ENCODE measurements at regions of chr3 and their contacts with region 1.

Region 1: DNA sequence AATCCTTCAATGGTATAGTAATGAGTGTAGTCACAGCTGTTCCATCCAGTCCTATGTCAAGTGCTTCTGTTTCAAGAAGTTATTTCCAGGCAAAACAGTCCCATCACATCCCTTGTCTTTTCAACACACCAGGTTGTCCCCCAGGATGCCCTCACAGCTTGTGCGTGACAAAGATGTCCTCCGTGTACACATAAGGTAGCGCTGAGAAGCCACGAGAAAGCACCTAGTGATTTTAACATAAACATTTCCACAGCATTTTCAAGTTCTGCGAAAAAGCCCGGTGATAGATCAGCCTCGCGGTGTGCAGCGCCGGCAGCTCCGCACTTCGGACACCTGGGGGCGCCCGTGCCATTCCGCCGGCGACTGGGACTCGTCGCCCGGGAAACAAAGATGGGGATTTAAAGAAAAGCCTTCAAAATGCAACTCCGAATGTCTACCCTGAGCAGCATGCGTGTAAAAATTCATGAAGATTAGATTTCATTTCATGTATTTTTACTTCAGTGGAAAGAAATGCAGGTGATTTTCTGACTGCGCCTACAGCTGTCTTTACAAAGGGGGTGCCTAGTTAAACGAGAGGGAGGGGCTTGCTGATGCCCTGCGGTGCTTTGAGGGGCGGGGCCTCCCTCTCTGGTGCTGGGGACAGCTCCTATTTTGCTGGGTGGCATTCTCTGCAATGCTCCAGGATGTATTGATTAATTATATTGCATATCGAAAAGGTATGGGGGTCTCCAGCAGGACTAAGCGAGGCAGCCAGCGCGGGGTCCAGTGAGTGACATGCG is 49.9 kb downstream of the KY start:
- DNase-seq: peak; percentile 83
- ATAC-seq: peak; percentile 90
- H3K4me3 Mint-ChIP-seq: no peak overlapping the region
- H3K27ac Mint-ChIP-seq: no peak overlapping the region
- H3K4me1 Mint-ChIP-seq: peaks cover 5% of the 10 kb centered on the region
- H3K27me3 Mint-ChIP-seq: peaks cover 5% of the 10 kb centered on the region

Region 2: DNA sequence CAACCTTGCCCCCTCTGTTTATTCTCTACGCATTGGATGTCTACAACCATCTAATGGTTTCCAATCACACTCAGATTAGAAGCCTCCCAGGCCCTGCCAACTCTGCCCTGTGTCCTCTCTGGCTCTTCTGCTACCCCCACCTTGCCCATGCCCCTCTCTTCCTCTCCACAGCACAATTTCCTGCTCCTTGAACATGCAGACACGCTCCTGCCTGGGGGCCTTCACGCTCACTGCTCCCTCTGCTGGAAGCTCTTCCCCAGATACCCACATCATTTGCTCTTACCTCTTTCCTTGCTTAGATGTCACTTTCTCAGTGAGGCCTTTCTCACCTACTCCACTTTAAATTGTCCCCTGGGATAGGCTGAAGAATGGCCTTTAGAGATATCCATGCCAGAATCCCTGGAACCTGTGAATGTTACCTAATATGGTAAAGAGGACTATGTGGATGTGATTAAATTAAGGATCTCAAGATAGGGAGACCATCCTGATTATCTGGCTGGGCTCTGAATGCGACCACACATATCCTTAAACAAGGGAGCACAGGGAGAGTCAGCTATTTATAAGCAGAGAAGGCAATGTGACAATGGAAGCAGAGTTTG is 40.1 kb after region 1 on chr3:
- CTCF ChIA-PET with region 1: interaction called, 3 read pairs
- POLR2A ChIA-PET with region 1: no interaction called
- intact Hi-C with region 1: loop called (anchors 1 to 2 kb)
- DNase-seq: peak; percentile 42
- ATAC-seq: no peak
- H3K4me3 Mint-ChIP-seq: no peak overlapping the region
- H3K27ac Mint-ChIP-seq: no peak overlapping the region
- H3K4me1 Mint-ChIP-seq: no peaks in the 10 kb centered on the region
- H3K27me3 Mint-ChIP-seq: no peaks in the 10 kb centered on the region

Region 3: DNA sequence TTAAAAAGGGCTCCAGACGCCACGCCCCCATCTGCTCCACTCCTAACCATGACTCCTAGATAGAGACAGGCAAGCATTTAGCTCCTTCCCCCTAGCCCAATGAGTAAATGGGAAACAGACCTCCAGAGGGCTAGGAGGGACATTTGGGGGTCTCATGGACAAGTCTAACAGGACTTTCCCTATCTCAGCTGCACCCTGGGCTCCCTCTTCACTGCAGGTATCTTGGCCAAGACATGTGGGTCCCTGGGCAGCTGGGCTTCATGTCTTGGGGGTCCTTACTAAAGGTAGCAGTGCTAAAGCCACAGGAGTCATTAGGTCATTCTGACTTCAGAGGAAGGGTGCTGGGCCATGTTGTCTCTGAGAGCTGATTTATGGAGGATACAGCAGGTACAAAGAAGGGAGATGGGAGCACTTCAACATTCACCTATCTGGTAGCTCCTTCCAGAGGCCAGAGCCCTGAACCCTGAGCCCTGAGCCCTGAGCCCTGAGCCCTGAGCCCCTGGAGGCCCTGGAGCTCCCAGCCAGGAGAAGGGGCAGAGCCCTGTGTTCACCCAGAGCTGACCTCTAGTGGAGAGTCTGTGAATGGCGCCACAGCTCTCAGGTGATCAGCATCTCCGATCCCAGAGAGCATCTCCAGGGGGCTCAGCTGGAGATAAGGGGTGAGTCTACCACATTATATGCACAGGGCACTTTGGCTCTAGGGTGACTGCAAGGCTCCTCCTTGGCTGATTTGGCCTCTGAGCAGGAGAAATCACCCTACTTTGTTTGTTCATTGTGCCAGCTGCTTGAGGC is 154.1 kb after region 1 on chr3:
- CTCF ChIA-PET with region 1: interaction called, 13 read pairs
- POLR2A ChIA-PET with region 1: no interaction called
- intact Hi-C with region 1: loop called (anchors 1 to 10 kb)
- DNase-seq: peak; percentile 65
- ATAC-seq: no peak
- H3K4me3 Mint-ChIP-seq: no peak overlapping the region
- H3K27ac Mint-ChIP-seq: no peak overlapping the region
- H3K4me1 Mint-ChIP-seq: no peaks in the 10 kb centered on the region
- H3K27me3 Mint-ChIP-seq: peaks cover 13% of the 10 kb centered on the region

Region 4: DNA sequence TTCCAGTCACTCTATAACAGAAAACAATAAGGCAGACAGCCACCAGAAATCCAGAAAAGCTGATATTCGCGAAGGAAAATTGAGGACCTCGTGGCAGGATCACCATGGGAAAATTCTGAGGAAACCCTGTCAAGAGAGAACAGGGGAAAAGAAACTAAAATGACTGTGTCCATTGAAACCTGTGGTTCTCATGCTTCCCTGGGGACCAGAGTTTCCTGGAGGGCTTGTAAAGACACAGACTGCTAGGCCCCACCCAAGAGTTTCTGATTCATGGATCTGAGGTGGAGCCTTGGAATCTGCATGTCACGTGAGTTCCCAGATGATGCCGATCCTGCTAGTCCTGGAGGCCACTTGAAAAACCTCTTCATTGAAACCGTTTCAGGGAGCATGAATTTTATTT is 614.6 kb after region 1 on chr3:
- CTCF ChIA-PET with region 1: no interaction called
- POLR2A ChIA-PET with region 1: no interaction called
- intact Hi-C with region 1: no loop called
- DNase-seq: no peak
- ATAC-seq: no peak
- H3K4me3 Mint-ChIP-seq: no peak overlapping the region
- H3K27ac Mint-ChIP-seq: no peak overlapping the region
- H3K4me1 Mint-ChIP-seq: no peaks in the 10 kb centered on the region
- H3K27me3 Mint-ChIP-seq: no peaks in the 10 kb centered on the region

Region 5: DNA sequence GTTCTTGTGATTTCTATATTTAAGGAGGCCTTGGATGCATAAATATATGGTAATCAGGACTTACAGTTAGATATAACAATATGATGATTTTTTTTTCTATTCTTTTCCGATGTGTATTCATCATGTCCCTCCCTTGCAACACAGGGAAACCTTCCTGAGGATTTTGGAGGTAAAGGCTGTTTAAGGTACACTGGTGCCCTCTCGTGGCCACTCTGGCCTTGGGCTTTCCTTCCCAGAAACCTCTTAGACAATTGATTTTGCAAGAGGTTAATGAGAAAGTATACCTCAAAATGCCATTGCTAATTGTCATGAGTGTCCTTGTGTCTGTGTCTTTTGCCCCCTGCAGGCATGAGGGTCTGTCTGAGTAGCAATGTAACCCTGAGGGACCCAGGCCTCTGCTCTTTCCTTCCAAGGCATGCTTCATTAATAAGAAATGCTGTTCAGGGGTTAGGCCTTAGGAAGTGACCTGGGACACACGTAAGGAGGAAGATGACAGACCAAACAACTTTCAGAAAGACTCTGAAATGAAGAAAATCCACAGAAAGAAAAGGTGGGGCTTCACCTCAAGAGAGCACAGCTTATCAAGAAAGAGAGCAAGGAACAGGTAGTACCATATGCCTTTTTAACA is 1294.3 kb after region 1 on chr3:
- CTCF ChIA-PET with region 1: interaction called, 4 read pairs
- POLR2A ChIA-PET with region 1: no interaction called
- intact Hi-C with region 1: loop called (anchors 1 to 2 kb)
- DNase-seq: peak; percentile 73
- ATAC-seq: no peak
- H3K4me3 Mint-ChIP-seq: no peak overlapping the region
- H3K27ac Mint-ChIP-seq: no peak overlapping the region
- H3K4me1 Mint-ChIP-seq: no peaks in the 10 kb centered on the region
- H3K27me3 Mint-ChIP-seq: peaks cover 6% of the 10 kb centered on the region

Measured in activated CD4-positive, alpha-beta T cell treated with anti-CD3 and anti-CD28 coated beads for 36 hours (primary cell).